Mucosa of descending colon (tissue), 3 donors: ENCODE measurements at regions of chr4 and their contacts with region 1.

Region 1: DNA sequence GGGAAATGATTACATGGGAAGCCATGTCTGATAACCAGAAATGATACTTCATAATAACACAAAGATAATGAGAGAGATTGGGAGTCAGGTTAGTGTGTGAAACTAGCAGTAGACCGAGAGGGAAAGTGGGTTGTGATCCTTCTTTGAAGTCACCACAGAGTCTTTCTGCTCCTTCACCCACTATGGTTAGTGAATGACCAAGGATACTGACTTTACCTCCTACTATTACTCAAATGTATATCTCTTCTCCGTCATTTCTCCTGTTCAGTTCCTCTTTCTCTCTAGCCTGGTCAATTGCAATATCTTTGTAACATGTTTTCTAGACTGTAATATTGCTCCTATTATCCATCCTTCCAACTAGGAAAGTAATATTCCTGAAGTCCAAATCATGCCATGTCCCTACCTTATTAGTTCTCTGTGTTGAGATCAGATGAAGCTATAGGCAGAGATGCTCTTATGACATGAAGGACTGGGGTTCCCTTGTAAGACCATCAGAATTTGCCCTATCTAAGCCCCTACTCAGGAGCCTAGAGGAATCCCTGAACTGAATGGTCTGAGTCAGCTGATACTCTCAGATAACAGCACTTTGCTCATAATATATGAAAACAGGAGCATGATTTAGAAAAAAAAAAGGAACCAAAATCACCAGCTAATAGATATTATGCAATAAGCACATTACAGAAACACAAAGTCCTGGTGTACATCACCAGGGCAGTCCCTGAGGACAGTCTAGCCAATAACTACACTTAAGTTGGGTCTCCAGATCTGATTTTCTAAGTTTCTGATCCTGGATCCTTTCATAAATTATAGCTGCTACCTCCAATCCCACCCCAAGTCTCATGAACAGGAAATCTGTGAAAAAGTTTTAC is 81.2 kb downstream of the SHROOM3 start:
- DNase-seq: no peak
- ATAC-seq: no peak
- H3K4me3 ChIP-seq: no peak overlapping the region
- H3K4me1 ChIP-seq: peaks cover 5% of the 10 kb centered on the region
- CTCF ChIP-seq: no peak

Region 2: GRCh38 chr4:76219299-76220055 is 296.7 kb before region 1 on chr4:
- intact Hi-C with region 1: no loop called
- DNase-seq: no peak
- ATAC-seq: peak; percentile 68
- H3K4me3 ChIP-seq: no peak overlapping the region
- H3K4me1 ChIP-seq: peaks cover 36% of the 10 kb centered on the region
- CTCF ChIP-seq: no peak

Region 3: DNA sequence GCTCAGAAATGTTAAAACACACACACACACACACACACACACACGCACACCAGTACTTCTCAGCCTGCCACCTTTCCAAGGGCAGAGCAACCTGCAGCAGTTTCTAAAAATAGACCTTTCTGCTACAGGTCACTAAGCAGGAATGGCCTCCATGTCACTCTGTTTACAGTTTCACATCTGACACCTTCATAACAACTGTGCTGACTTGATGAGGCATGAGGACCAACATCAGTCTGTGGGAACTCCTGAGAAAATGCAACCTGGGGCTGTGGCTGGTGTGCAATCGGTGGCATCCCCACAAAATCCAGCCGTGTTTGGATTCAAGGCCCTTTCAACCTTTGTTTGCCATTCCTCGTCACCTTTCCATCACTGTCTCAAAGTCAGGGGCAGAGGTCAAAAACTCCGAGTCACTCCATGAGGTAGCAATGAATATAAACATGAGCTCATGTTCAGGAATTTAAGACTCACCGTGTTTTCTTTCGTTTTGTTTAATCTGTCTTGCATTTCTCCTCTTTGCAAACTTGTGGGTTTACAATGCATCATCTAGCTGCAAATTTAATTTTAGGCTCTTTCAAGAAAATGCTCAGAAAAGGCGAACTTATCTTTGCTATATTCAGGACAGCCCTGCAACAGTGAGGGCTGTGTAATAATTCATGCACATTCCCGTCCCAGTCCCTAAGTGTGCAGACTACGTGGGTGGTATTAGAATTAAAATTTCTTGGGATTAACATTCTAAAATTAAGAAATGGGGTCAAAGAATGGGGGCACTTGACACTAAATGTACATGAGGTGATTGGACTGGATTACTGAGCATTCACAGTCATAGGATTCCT is 54.1 kb after region 1 on chr4:
- intact Hi-C with region 1: loop called in 1 of 2 experiments (anchors 10 kb)
- DNase-seq: no peak
- ATAC-seq: peak; percentile 58
- H3K4me3 ChIP-seq: no peak overlapping the region
- H3K4me1 ChIP-seq: peaks cover 9% of the 10 kb centered on the region
- CTCF ChIP-seq: no peak

Region 4: GRCh38 chr4:76708971-76709771 is 193.0 kb after region 1 on chr4:
- intact Hi-C with region 1: no loop called
- DNase-seq: no peak
- ATAC-seq: no peak
- H3K4me3 ChIP-seq: no peak overlapping the region
- H3K4me1 ChIP-seq: peaks cover 18% of the 10 kb centered on the region
- CTCF ChIP-seq: no peak

Region 5: DNA sequence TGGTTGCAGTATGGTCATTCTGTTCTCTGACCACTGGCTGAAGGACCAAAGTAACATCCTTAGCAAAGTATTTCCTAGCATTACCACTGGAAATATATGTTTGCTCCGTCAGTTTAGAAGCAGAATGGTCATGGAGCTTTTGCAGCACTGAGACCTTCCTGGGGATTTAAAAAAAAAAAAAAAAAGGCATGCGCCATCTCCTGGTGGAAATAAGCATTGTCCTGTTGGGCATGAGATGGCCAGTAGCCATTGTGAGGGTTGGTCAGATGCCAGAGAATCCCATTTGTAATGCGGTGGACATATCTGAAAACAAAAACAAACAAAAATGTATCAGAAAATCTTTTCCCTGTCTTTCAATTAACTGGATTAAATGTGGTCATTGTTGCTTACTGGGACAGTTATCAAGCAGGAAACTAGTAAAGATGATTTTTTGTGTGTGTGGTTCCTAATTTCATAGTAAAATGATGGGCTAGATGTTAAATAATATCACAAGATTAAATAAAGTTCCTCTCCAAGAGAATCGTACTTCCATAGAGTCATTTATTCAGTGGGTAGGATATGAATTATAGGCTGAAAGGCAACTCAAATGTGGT is 242.2 kb after region 1 on chr4:
- intact Hi-C with region 1: loop called in 1 of 2 experiments (anchors 5 kb)
- DNase-seq: peak in 1 of 3 donors; percentile 53
- ATAC-seq: peak; percentile 72
- H3K4me3 ChIP-seq: no peak overlapping the region
- H3K4me1 ChIP-seq: no peaks in the 10 kb centered on the region
- CTCF ChIP-seq: peak; percentile 54